Dorsolateral prefrontal cortex (tissue), 120 donors: ENCODE measurements at regions of chr9 and their contacts with region 1.

Region 1: GRCh38 chr9:97900738-97901565 is 21.3 kb downstream of the TRMO start:
- DNase-seq: peak in 2 of 10 donors; percentile 20 to 59
- H3K4me3 ChIP-seq: no peak overlapping the region
- H3K27ac ChIP-seq: no peak overlapping the region
- H3K27me3 ChIP-seq: no peaks in the 10 kb centered on the region
- CTCF ChIP-seq: peak; percentile 35 to 81 (median 70)

Region 2: DNA sequence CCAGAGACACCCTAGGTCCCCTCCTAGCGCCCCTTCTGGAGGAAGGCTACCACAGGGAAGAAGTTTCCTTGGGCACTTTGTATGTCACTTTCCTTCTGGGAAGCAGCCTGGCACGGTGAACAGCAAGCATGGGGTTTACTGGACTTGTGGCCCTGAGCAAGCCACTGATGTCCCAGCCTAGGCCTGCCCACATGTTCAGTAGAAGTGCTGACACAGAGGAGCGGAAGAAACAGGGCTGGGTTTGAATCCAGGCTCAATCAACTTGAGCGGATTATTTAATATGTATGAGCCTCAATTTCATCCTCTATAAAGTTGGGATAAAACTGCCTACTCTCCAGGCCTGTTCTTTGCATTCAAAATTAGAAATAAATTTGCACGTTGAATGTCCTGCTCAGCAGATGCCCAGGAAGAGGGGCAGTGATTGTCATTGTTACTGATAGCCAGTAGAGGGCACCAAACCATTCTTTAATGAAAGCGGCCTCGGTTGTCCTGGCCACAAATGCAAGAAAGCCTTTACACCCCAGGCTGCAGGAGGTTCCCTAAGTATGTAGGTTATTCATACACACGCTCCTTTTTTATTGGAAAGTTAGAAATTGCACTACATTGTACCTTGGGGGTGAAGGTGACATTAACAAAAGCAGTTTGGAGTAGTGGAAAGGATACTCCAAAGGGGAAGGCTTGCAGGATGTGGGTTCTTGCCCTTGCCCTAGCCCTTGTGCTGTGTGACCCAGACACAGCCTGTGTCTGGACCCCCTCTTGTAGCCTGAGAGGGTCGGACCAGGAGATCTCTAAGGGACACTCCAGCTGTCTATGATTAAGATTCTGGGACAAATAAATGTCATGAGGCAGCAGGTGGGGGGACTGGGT is 190.4 kb before region 1 on chr9:
- intact Hi-C with region 1: loop called (anchors 1 to 10 kb)
- DNase-seq: peak in 6 of 10 donors; percentile 22 to 52 (median 46)
- H3K4me3 ChIP-seq: no peak overlapping the region
- H3K27ac ChIP-seq: no peak overlapping the region
- H3K27me3 ChIP-seq: peaks cover 0 to 7% (median 0%) of the 10 kb centered on the region in 45 donors
- CTCF ChIP-seq: peak; percentile 57 to 95 (median 87)